ENCODE measurements at regions of chr2 and their contacts with region 1.

Region 1: DNA sequence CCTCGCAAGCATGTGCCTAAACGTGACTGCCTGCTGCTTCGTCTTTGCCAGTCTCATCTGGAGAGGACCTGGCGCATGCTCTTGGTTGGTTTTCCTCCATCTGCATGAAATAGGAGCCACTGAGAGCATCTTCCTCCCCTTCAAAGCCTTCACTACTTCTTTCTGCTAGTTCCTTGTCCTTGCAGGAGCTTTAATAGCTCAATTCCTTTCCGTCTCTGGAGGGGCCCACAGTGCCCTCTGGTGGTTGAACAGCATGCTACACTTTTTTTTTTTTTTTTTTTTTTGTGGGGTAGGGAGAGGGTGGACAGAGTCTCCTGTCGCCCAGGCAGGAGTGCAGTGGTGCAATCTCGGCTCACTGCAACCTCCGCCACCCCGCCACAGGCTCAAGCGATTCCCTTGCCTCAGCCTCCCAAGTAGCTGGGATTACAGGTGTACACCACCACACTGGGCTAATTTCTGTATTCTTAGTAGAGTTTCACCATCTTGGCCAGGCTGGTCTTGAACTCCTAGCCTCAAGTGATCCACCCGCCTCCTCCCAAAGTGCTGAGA is 59.6 kb downstream of the SP110 start:
- DNase-seq: peak; percentile 68
- H3K4me3 ChIP-seq: no peak overlapping the region
- H3K27ac ChIP-seq: no peak overlapping the region
- H3K4me1 ChIP-seq: no peaks in the 10 kb centered on the region
- H3K27me3 ChIP-seq: no peaks in the 10 kb centered on the region
- CTCF ChIP-seq: peak; percentile 81

Region 2: DNA sequence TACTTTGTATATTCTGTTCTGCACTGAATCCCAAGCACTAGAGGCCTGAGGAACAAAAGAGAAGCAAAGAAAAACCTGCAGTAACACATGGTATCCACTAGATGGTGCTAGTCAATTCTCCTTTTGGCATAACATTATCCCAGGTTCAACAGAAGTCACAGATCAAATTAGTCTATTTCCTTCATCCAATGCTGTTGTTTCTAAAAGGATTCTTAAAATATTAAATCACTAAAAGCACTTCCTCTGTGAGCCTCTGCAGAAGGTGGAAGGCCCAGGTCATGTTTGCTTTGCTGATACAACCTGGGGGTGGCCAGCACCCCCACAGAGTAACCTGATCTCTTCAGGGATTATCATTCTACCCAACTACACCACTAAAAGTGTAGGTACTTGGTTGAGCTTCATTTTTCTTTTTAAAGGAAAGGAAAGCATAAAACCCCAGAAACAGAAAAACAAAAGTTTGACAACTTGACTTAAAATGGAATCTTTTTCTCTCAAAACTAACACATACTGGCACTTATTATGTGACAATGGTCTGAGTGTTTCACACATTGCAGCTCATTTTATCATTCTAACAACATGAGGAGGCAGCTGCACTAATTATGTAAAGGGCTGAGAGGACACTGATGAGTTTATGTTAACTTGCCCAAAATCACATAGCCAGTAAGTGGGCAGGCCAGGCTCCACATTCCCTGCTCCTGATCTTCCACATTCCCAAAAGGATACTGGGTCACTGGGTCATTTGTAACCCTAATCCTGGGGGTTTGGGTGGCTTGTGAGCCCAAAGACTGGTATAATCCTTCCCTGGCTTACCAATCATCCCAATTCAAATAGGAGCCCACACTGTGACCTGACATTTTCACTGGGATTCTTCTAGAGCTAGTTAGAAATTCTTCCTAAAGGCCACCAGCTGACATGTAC is 379.1 kb before region 1 on chr2:
- CTCF ChIA-PET with region 1: no interaction called
- POLR2A ChIA-PET with region 1: no interaction called
- intact Hi-C with region 1: loop called (anchors 10 kb)
- DNase-seq: peak; percentile 64
- H3K4me3 ChIP-seq: no peak overlapping the region
- H3K27ac ChIP-seq: no peak overlapping the region
- H3K4me1 ChIP-seq: peaks cover 5% of the 10 kb centered on the region
- H3K27me3 ChIP-seq: no peaks in the 10 kb centered on the region
- CTCF ChIP-seq: peak; percentile 89

Region 3: GRCh38 chr2:229800997-229801754 is 359.0 kb before region 1 on chr2:
- CTCF ChIA-PET with region 1: interaction called, 11 read pairs
- POLR2A ChIA-PET with region 1: no interaction called
- intact Hi-C with region 1: no loop called
- DNase-seq: peak; percentile 74
- H3K4me3 ChIP-seq: no peak overlapping the region
- H3K27ac ChIP-seq: no peak overlapping the region
- H3K4me1 ChIP-seq: no peaks in the 10 kb centered on the region
- H3K27me3 ChIP-seq: no peaks in the 10 kb centered on the region
- CTCF ChIP-seq: peak; percentile 80

Region 4: DNA sequence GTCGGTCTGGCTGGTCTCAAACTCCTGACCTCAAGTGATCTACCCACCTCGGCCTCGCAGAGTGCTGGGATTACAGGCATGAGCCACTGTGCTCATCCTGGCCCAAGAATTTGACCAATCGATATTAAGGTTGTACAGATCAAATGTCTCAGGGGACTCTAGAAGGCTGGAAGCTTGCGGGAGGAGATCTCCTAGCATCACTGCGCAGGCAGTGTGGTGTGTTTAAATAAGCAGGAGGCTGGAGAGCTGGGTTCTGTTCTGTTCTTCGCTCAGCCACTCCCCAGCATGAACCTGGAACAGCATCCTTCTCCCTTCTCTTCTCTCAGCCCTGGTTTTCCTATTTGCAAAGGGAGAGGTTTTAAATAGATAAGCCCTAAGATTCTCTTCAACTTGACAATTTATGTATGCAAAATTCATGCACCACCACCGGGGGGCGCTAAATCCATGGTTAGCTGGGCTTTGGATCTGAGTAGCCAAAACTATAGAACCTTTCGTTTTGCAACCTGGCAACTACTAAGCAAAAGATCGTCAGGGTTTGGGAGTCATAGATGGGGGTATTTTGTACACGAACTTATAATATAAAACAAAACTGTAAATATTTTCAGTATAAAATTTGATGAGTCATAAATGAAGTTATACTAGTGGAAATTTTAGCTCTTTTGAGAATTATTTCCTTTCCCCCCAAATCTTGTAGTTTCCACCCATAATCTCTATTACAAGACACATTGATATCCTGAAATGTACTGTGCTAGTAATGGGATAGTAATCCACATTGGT is 152.1 kb before region 1 on chr2:
- CTCF ChIA-PET with region 1: interaction called, 14 read pairs
- POLR2A ChIA-PET with region 1: no interaction called
- intact Hi-C with region 1: loop called (anchors 1 kb)
- DNase-seq: peak; percentile 78
- H3K4me3 ChIP-seq: no peak overlapping the region
- H3K27ac ChIP-seq: no peak overlapping the region
- H3K4me1 ChIP-seq: no peaks in the 10 kb centered on the region
- H3K27me3 ChIP-seq: no peaks in the 10 kb centered on the region
- CTCF ChIP-seq: peak; percentile 86

Region 5: GRCh38 chr2:230068016-230068650 is 92.1 kb before region 1 on chr2:
- CTCF ChIA-PET with region 1: interaction called, 9 read pairs
- POLR2A ChIA-PET with region 1: no interaction called
- intact Hi-C with region 1: loop called (anchors 5 kb)
- DNase-seq: peak; percentile 59
- H3K4me3 ChIP-seq: peak overlapping the region; percentile 64
- H3K27ac ChIP-seq: peak overlapping the region; percentile 35
- H3K4me1 ChIP-seq: no peaks in the 10 kb centered on the region
- H3K27me3 ChIP-seq: no peaks in the 10 kb centered on the region
- CTCF ChIP-seq: peak; percentile 32

Region 6: DNA sequence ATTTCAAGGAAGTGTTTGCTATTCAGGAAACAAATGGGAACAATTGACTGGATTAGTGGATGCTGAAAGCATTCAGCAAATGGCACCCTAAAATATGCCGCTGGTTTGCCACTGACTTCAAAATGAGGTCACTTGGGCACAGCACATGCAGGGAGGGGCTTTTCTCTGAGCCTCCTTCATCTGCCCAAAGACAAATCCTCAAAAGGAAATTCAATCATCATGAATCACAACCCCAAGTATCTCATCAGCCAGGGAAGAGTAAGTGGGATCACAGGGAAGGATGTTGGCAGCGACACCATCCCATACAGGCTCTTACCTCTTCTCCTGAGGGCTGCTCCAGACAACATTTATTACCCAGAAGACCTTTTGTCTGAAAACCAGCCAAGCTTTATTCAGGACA is 152.5 kb after region 1 on chr2:
- CTCF ChIA-PET with region 1: no interaction called
- POLR2A ChIA-PET with region 1: no interaction called
- intact Hi-C with region 1: no loop called
- DNase-seq: peak; percentile 29
- H3K4me3 ChIP-seq: no peak overlapping the region
- H3K27ac ChIP-seq: no peak overlapping the region
- H3K4me1 ChIP-seq: no peaks in the 10 kb centered on the region
- H3K27me3 ChIP-seq: no peaks in the 10 kb centered on the region
- CTCF ChIP-seq: no peak

Region 7: GRCh38 chr2:230614913-230615332 is 454.7 kb after region 1 on chr2:
- CTCF ChIA-PET with region 1: no interaction called
- POLR2A ChIA-PET with region 1: no interaction called
- intact Hi-C with region 1: loop called (anchors 5 kb)
- DNase-seq: no peak
- H3K4me3 ChIP-seq: no peak overlapping the region
- H3K27ac ChIP-seq: no peak overlapping the region
- H3K4me1 ChIP-seq: no peaks in the 10 kb centered on the region
- H3K27me3 ChIP-seq: no peaks in the 10 kb centered on the region
- CTCF ChIP-seq: no peak

Measured in A673 (cell line).